Calu3 (cell line): ENCODE measurements at regions of chr11 and their contacts with region 1.

Region 1: DNA sequence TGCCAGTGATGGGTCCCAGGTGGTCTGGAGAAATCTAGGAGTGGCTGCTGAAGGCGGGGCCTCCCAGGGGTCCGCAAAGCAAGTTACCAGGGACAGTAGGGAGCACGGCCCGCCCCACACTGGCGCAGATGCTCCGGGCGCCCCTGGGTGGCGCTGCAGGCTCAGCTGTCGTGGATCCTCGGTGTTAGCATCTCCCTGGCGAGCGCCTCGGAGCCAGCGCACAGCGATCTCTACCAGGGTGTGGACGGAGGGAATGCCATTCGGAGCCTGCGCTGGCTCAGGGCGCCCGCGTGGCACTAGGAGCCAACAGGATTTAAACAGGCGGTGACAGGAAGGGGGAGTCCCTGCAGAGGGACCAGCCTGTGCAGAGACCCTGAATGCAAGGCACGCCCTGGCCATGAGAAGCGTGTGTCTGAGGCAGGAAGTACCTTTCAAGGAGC is 20.2 kb downstream of the FADS3 start:
- DNase-seq: peak; percentile 83
- H3K4me3 Mint-ChIP-seq: no peak overlapping the region
- H3K27ac Mint-ChIP-seq: no peak overlapping the region
- H3K4me1 Mint-ChIP-seq: peaks cover 8% of the 10 kb centered on the region
- H3K27me3 Mint-ChIP-seq: no peaks in the 10 kb centered on the region
- CTCF ChIP-seq: peak; percentile 75

Region 2: DNA sequence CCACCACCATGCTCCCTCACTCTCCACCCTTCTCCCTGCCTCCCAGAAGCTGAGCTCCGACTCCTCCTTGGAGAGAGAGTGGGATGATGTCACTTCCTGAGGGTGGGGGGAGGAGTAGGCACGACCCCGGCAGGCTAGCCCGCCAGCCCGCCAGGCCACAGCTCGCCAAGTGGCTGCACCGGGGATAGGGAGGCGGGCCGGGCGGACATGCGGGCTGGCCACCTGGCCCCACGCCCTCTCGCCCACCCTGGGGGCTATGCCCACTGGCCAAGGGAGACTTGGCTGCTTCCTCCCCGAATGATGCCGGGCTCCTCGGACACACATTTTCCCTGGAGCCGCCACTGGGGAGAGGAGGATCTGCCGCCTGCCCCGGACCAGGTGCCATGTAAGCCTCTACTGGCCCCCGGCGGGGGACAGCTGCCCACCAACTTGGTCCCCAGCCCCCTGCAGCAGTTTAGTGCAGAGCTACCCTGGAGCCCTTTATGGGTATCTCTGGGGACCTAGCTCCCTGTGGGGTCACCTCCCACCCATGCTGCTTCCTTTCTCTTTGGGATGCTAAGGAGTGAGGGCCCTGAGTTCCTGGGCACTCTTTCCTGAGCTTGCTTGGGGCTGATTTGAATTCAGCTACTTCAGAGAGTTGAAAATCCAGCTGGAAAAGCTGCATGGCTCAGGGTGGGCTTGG is 152.4 kb before region 1 on chr11:
- CTCF ChIA-PET with region 1: no interaction called
- intact Hi-C with region 1: no loop called
- DNase-seq: no peak
- H3K4me3 Mint-ChIP-seq: no peak overlapping the region
- H3K27ac Mint-ChIP-seq: no peak overlapping the region
- H3K4me1 Mint-ChIP-seq: peaks cover 13% of the 10 kb centered on the region
- H3K27me3 Mint-ChIP-seq: no peaks in the 10 kb centered on the region
- CTCF ChIP-seq: no peak

Region 3: GRCh38 chr11:61827571-61828378 is 43.4 kb before region 1 on chr11 and contains the start of gene FADS2:
- CTCF ChIA-PET with region 1: no interaction called
- intact Hi-C with region 1: no loop called
- DNase-seq: peak; percentile 50
- H3K4me3 Mint-ChIP-seq: peak within 1 kb of the TSS; percentile 71
- H3K27ac Mint-ChIP-seq: no peak within 1 kb of the TSS
- H3K4me1 Mint-ChIP-seq: no peaks in the 10 kb centered on the region
- H3K27me3 Mint-ChIP-seq: peaks cover 68% of the 10 kb centered on the region
- CTCF ChIP-seq: no peak
- total RNA-seq, gene FADS2: 8.5 and 19.2 TPM in 2 replicates

Region 4: DNA sequence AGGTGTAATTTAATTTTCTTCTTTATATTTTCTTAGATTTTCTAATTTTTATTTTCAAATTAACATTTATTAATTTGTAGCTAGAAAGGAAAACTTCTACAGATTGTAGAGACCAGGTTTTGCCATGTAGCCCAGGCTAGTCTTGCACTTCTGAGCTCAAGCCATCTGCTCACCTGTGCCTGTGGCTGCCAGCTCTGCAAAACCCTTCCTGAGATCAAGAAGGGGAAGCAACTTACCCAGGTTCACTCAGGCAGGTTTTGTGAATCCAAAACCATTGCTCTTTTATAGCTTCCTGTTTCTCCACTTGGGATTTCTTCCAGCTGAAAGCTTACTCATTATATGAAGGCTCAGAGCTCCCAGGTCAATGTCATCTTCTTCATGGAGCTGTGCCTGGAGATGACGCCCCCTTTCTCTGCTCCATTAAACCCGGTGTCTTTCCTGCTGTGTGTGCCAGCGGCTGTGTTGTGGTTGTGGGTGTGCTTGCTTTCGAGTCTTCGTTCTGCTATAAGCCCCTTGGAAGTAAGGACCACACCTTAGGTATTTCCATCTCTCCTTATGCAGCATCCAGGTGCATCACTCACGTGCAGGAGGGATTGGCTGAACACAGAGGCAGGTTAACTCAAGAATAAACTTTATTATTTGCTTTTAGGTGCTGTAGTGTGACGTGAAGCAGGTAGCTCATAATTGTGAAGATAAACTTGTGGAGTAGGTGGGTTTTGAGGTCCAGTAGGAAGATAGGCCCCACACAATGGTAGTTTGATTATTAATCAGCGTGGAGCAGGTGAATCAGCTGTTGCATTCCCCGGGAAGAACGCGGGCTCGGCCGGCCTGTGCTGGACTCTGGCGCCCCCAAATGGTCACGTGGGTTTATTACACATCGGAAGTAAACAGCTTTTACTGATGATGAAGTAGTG is 210.5 kb after region 1 on chr11:
- CTCF ChIA-PET with region 1: interaction called, 6 read pairs
- intact Hi-C with region 1: loop called (anchors 1 kb)
- DNase-seq: peak; percentile 87
- H3K4me3 Mint-ChIP-seq: no peak overlapping the region
- H3K27ac Mint-ChIP-seq: no peak overlapping the region
- H3K4me1 Mint-ChIP-seq: no peaks in the 10 kb centered on the region
- H3K27me3 Mint-ChIP-seq: no peaks in the 10 kb centered on the region
- CTCF ChIP-seq: peak; percentile 90